CD4-positive, alpha-beta memory T cell (primary cell): ENCODE measurements at regions of chr2 and their contacts with region 1.

Region 1: GRCh38 chr2:54665436-54665856 is 58.0 kb upstream of the EML6 start:
- DNase-seq: peak; percentile 11 to 52 (median 34)
- H3K4me3 ChIP-seq: no peak overlapping the region
- H3K4me3 Mint-ChIP-seq: no peak overlapping the region
- H3K27ac ChIP-seq: no peak overlapping the region
- H3K27ac Mint-ChIP-seq: peak overlapping the region in 6 of 7 donors; percentile 9 to 85 (median 70)
- H3K4me1 ChIP-seq: no peaks in the 10 kb centered on the region
- H3K4me1 Mint-ChIP-seq: peaks cover 0 to 13% (median 3%) of the 10 kb centered on the region in 4 donors
- H3K27me3 ChIP-seq: no peaks in the 10 kb centered on the region
- H3K27me3 Mint-ChIP-seq: no peaks in the 10 kb centered on the region

Region 2: DNA sequence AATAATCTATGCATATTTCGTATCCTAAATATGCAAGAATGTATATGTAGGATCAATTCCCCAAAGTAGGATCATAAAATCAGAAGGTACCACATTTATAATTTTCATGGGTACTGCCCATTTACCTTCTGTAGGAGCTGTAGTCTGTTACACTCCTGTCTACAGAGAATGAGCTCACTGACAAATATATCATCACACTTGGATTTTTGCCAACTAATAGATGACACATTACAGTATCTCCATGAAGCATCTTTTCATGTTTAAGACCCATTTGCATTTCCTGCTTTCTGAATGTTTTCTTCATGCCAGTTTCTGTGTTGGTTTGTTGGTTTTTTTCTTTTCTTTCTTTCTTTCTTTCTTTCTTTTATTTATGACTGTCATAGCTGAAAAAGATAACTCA is 12.9 kb before region 1 on chr2:
- CTCF ChIA-PET with region 1: interaction called, 10 read pairs
- POLR2A ChIA-PET with region 1: no interaction called
- intact Hi-C with region 1: no loop called
- DNase-seq: no peak
- H3K4me3 ChIP-seq: no peak overlapping the region
- H3K4me3 Mint-ChIP-seq: no peak overlapping the region
- H3K27ac ChIP-seq: no peak overlapping the region
- H3K27ac Mint-ChIP-seq: peak overlapping the region in 2 of 7 donors; percentile 9 to 48
- H3K4me1 ChIP-seq: no peaks in the 10 kb centered on the region
- H3K4me1 Mint-ChIP-seq: peaks cover 0 to 5% (median 2%) of the 10 kb centered on the region in 4 donors
- H3K27me3 ChIP-seq: no peaks in the 10 kb centered on the region
- H3K27me3 Mint-ChIP-seq: no peaks in the 10 kb centered on the region

Region 3: DNA sequence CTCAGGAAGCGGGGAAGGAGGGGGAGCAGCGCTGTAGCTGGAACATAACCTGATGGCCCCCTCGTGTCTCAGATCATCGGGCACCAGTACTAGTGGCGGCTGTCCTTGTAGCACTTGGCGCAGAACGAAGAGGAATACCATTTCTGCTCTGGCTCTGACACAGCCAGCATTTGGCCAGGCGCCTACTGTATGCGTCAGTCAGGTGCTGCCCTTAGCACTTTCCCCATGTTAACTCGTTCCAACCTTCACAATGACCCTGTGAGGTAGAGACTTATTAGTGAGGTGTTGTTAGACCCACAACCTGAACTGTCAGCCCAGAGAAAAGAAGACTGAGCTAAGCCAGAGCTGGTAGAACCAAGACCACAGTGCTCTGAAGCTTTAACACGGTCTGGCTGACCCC is 10.3 kb after region 1 on chr2:
- CTCF ChIA-PET with region 1: interaction called, 17 read pairs
- POLR2A ChIA-PET with region 1: interaction called, 3 read pairs
- intact Hi-C with region 1: no loop called
- DNase-seq: no peak
- H3K4me3 ChIP-seq: no peak overlapping the region
- H3K4me3 Mint-ChIP-seq: no peak overlapping the region
- H3K27ac ChIP-seq: no peak overlapping the region
- H3K27ac Mint-ChIP-seq: no peak overlapping the region
- H3K4me1 ChIP-seq: peaks cover 16% of the 10 kb centered on the region
- H3K4me1 Mint-ChIP-seq: peaks cover 11 to 25% (median 19%) of the 10 kb centered on the region in 4 donors
- H3K27me3 ChIP-seq: no peaks in the 10 kb centered on the region
- H3K27me3 Mint-ChIP-seq: no peaks in the 10 kb centered on the region